ENCODE measurements at regions of chr10 and their contacts with region 1.

Region 1: GRCh38 chr10:28676968-28677887 is at the start of gene BAMBI:
- DNase-seq: peak; percentile 72
- H3K4me3 ChIP-seq: peak within 1 kb of the TSS; percentile 79
- H3K27ac ChIP-seq: no peak within 1 kb of the TSS
- H3K27me3 ChIP-seq: peaks cover 33% of the 10 kb centered on the region
- CTCF ChIP-seq: peak; percentile 60
- polyA plus RNA-seq, gene BAMBI: 10.8 and 11.0 TPM in 2 replicates

Region 2: DNA sequence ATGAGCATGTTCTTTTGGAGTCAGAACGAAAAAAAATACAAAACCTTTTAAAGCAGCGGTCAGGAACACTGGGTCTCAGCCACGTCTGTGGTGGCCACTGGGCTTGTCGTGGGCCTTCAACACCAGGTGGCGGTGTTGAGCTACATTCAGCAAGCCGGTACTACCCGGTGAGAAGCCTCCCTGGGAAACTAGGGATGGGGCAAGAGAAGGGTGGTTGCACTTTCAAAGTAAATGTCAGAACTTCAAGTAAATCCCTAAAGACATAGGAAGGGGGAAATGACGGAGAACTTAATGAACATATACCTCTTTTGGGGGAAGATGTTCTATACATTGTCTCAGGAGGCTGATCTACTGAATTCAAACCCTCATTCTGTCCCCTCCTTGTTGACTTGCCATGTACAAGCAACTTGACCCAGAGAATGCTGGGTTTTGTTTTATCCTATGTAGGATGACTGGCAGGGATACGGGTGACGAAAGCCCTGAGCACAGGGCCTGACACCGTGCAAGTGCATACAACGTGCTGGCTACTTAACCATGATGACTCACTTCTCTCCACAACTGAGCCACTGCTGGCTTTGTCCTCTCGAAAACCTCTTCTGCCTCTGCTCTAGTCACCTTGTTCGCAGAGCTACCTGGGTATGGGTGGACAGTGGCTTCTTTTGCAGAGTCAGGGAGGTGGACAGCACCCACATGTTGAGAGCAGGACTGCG is 48.9 kb before region 1 on chr10:
- CTCF ChIA-PET with region 1: no interaction called
- POLR2A ChIA-PET with region 1: no interaction called
- DNase-seq: peak; percentile 44
- H3K4me3 ChIP-seq: no peak overlapping the region
- H3K27ac ChIP-seq: no peak overlapping the region
- H3K27me3 ChIP-seq: peaks cover 13% of the 10 kb centered on the region
- CTCF ChIP-seq: peak; percentile 97

Region 3: DNA sequence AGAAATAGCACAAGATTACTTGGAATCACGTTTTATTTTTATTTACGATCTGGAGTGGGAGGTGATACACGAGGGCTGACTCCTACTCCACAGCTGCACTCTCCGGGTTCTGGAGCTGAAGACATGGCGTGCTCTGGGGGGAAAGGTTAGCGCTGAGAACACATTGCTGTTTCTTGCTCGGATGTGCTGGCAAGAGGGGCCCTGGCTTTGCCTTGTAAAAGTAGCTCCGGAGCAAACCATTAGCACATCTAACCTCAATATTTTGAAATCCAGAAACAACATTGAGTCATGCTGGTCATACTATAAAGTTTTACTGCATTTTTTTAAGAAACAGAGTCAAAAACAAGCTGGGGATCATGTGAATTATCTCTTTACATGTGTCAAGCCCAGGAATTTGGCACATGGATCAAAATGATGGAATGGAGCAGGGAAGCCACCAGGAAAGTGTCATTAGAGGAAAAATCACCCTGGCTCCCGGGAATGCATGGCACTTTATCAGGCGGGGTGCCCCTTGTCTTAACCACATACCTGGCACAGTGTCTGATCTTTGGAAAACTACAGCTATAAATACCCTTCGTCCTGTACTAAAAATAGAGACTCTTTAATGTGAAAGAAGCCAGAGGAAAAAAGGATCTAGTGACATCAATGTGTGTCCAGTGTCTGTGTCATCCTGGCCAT is 580.0 kb after region 1 on chr10:
- CTCF ChIA-PET with region 1: interaction called, 20 read pairs
- POLR2A ChIA-PET with region 1: no interaction called
- DNase-seq: peak; percentile 71
- H3K4me3 ChIP-seq: peak overlapping the region; percentile 17
- H3K27ac ChIP-seq: peak overlapping the region; percentile 52
- H3K27me3 ChIP-seq: peaks cover 43% of the 10 kb centered on the region
- CTCF ChIP-seq: no peak